Dorsolateral prefrontal cortex (tissue), 120 donors: ENCODE measurements at regions of chr7 and their contacts with region 1.

Region 1: DNA sequence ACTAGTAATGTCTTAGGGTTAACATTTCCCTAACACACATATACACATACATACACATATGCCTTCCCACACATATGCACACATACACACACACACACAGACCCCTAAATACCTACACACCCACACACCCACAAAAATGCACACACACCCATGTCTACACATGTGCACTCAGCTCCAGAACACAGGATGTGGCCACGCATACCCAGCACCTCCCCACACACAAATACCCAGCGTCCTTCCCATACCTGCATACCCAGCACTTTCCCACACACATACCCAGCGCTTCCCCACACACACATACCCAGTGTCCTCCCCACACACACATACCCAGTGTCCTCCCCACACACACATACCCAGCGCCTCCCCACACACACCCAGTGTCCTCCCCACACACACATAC is 534.9 kb downstream of the DNAJB6 start:
- DNase-seq: no peak
- H3K4me3 ChIP-seq: no peak overlapping the region
- H3K27ac ChIP-seq: no peak overlapping the region
- H3K27me3 ChIP-seq: peaks cover 0 to 5% (median 0%) of the 10 kb centered on the region in 45 donors
- CTCF ChIP-seq: no peak

Region 2: GRCh38 chr7:157432957-157433576 is 438.6 kb before region 1 on chr7:
- intact Hi-C with region 1: loop called in 1 of 2 experiments (anchors 2 kb)
- DNase-seq: peak in 8 of 10 donors; percentile 26 to 77 (median 62)
- H3K4me3 ChIP-seq: peak overlapping the region in 52 of 59 donors; percentile 10 to 61 (median 40)
- H3K27ac ChIP-seq: no peak overlapping the region
- H3K27me3 ChIP-seq: no peaks in the 10 kb centered on the region
- CTCF ChIP-seq: peak; percentile 47 to 86 (median 72)

Region 3: GRCh38 chr7:157979637-157980340 is 108.1 kb after region 1 on chr7:
- intact Hi-C with region 1: no loop called
- DNase-seq: no peak
- H3K4me3 ChIP-seq: no peak overlapping the region
- H3K27ac ChIP-seq: no peak overlapping the region
- H3K27me3 ChIP-seq: peaks cover 0 to 6% (median 0%) of the 10 kb centered on the region in 45 donors
- CTCF ChIP-seq: no peak

Region 4: GRCh38 chr7:158001621-158002320 is 130.1 kb after region 1 on chr7:
- intact Hi-C with region 1: no loop called
- DNase-seq: peak in 1 of 10 donors; percentile 30
- H3K4me3 ChIP-seq: no peak overlapping the region
- H3K27ac ChIP-seq: no peak overlapping the region
- H3K27me3 ChIP-seq: peaks cover 0 to 5% (median 0%) of the 10 kb centered on the region in 45 donors
- CTCF ChIP-seq: no peak